Activated naive CD8-positive, alpha-beta T cell treated with anti-CD3 and anti-CD28 coated beads, Interleukin-2, amount 10 ng/mL, durations not matched to agents 7 days and 5 days (primary cell): ENCODE measurements at regions of chr10 and their contacts with region 1.

Region 1: DNA sequence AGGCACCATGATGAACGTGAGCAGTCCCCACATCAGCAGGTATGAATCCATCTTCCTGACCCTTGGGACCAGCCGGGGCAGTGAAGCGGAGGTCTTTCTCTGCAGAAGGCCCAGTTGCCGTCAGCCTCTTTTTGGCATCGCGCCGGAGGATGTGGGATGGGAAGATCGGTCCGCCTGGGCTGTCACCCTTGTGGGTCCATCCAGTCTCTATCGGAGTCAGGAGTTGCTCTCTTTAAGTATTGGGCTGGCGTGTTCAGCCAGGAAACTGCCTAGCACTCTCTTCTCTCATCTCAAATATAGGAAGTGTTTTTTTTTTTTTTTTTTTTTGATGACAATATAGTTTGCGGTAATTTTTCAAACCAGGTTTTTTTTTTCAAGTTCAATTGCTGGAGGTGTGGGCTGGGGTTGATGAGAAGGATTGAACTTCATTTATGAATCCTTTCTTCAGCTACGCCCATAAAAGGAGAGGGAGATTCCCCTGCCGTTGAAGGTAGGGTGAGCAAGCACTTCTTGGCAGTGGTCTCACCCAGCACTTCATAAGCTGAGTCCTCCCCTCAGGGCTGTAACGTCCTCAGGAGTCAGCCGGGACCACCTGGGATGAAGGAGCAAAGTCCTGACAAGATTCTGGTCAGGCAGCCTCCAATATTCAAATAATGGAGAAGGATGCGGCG is at the start of gene IL2RA:
- DNase-seq: peak; percentile 73
- ATAC-seq: peak; percentile 75
- H3K4me3 Mint-ChIP-seq: peak within 1 kb of the TSS; percentile 91
- H3K27ac Mint-ChIP-seq: peak within 1 kb of the TSS; percentile 92
- H3K4me1 Mint-ChIP-seq: peaks cover 65% of the 10 kb centered on the region
- H3K27me3 Mint-ChIP-seq: no peaks in the 10 kb centered on the region
- total RNA-seq, gene IL2RA: 184 to 201 TPM

Region 2: GRCh38 chr10:6083523-6084475 is 21.6 kb after region 1 on chr10:
- POLR2A ChIA-PET with region 1: interaction called, 49 read pairs
- DNase-seq: no peak
- ATAC-seq: peak; percentile 60
- H3K4me3 Mint-ChIP-seq: peak overlapping the region; percentile 79
- H3K27ac Mint-ChIP-seq: peak overlapping the region; percentile 89
- H3K4me1 Mint-ChIP-seq: peaks cover 56% of the 10 kb centered on the region
- H3K27me3 Mint-ChIP-seq: no peaks in the 10 kb centered on the region

Region 3: GRCh38 chr10:6088721-6089390 is 26.6 kb after region 1 on chr10 and contains the start of gene RBM17:
- POLR2A ChIA-PET with region 1: interaction called, 49 read pairs
- DNase-seq: peak; percentile 100
- ATAC-seq: peak; percentile 84
- H3K4me3 Mint-ChIP-seq: peak within 1 kb of the TSS; percentile 94
- H3K27ac Mint-ChIP-seq: peak within 1 kb of the TSS; percentile 93
- H3K4me1 Mint-ChIP-seq: peaks cover 61% of the 10 kb centered on the region
- H3K27me3 Mint-ChIP-seq: no peaks in the 10 kb centered on the region
- total RNA-seq, gene RBM17: 185 to 200 TPM